Mammary epithelial cell (primary cell): ENCODE measurements at regions of chr12 and their contacts with region 1.

Region 1: DNA sequence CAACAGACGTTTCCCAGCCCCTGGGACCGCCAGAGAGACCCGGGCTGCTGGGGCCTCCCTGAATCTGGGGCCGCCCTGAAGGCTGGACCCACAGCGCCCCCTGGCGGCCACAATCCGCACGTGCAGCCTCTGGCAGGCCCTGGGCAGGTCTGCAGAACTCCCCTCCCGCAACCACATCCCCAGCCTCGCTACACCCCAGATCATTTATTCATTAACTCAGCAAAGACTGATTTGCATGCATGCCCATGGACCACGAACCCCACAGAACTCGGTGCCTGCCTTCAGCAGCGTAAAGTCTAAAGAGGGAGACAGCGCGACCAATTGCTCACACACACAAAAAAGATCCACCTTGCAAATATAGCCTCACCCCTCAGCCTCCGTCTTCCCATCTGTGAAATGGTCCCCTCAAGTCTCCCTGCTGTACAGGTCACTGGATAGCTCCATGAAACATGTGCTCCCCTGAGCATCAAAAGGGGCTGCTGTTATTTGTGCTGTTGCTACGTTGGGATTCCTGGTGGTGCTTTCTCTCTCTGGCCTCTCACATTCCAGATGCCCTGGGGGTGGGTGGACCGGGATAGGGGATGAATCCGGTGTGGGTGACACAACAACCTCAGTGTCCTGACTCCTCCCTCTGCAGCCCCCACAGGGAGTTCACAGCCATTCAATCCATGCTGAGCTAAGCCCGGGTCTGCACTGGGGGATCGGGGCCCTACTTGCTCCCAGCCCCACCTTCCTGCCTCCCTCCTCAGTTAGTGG is 96.4 kb downstream of the SCARB1 start:
- DNase-seq: peak; percentile 43
- H3K4me3 ChIP-seq: no peak overlapping the region
- H3K27ac ChIP-seq: no peak overlapping the region
- H3K4me1 ChIP-seq: peaks cover 11% of the 10 kb centered on the region
- H3K27me3 ChIP-seq: no peaks in the 10 kb centered on the region
- CTCF ChIP-seq: peak; percentile 78 to 98

Region 2: GRCh38 chr12:123801573-123802178 is 965.6 kb before region 1 on chr12:
- CTCF ChIA-PET with region 1: no interaction called
- dilution Hi-C with region 1: no loop called
- in situ Hi-C with region 1: no loop called
- intact Hi-C with region 1: loop called (anchors 5 kb)
- DNase-seq: peak; percentile 12
- H3K4me3 ChIP-seq: no peak overlapping the region
- H3K27ac ChIP-seq: no peak overlapping the region
- H3K4me1 ChIP-seq: no peaks in the 10 kb centered on the region
- H3K27me3 ChIP-seq: peaks cover 2% of the 10 kb centered on the region
- CTCF ChIP-seq: peak; percentile 54 to 69

Region 3: DNA sequence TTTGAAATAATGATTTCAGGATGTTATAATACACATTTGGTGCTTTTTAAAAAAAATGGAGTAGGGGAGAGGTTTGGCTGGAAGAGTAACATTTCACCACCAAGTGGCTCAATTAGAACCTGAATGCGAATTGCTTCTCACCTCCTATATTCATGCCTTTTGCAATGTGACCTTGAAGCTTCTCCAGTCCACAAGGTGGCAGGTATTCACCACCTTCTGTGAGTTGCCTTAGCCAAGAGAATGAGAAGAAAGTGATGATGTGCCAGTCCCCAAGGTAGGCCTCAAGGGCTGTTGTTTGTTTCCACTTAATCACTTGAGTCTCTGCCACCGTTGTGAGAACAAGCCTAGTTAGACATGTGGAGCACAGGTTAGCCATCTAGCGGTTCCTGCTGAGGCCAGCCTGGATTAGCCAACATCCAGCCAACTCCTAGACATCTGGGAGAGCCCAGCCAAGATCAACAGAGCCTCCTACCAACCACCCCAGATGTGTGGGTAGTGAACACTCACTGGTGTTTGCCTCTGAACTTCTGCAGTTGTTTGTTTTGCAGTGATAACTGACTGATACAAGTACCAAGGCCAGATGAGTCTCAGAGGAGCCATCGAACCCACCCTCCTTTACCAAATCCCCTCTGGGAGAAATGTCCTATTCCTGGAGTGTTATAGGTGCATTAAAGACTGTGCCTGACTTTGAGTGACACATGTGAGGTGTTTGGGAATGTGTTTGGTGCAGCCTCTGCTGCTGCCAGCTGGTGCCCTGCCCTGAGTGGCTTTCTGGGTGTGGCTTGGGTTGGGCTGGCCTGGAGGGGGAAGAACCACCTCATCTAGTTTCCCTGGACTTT is 604.9 kb before region 1 on chr12:
- CTCF ChIA-PET with region 1: no interaction called
- dilution Hi-C with region 1: no loop called
- in situ Hi-C with region 1: no loop called
- intact Hi-C with region 1: loop called (anchors 10 kb)
- DNase-seq: peak; percentile 19
- H3K4me3 ChIP-seq: no peak overlapping the region
- H3K27ac ChIP-seq: no peak overlapping the region
- H3K4me1 ChIP-seq: no peaks in the 10 kb centered on the region
- H3K27me3 ChIP-seq: no peaks in the 10 kb centered on the region
- CTCF ChIP-seq: peak in 1 of 2 donors; percentile 29

Region 4: DNA sequence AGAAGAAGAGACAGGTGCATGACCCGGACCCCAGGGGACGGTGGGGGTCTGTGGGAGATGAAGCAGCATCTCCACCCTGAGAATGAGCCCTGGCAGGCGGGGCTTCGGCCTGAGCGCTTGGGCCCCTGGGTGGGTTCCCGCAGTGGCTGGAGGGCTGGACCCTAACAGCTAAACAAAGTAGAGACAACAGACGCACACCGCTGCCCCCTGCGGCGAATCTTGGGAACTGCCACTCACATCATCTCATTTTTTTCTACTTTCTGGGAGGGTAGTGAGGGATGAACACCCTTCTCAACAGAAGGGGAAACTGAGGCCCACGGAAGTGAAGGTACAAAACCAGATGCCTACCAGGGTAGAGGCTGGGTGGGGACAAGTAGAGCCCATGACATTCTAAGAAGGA is 367.6 kb before region 1 on chr12:
- CTCF ChIA-PET with region 1: no interaction called
- dilution Hi-C with region 1: no loop called
- in situ Hi-C with region 1: loop called in 1 of 2 experiments (anchors 25 kb)
- intact Hi-C with region 1: no loop called
- DNase-seq: no peak
- H3K4me3 ChIP-seq: no peak overlapping the region
- H3K27ac ChIP-seq: no peak overlapping the region
- H3K4me1 ChIP-seq: no peaks in the 10 kb centered on the region
- H3K27me3 ChIP-seq: no peaks in the 10 kb centered on the region
- CTCF ChIP-seq: peak; percentile 58 to 69

Region 5: DNA sequence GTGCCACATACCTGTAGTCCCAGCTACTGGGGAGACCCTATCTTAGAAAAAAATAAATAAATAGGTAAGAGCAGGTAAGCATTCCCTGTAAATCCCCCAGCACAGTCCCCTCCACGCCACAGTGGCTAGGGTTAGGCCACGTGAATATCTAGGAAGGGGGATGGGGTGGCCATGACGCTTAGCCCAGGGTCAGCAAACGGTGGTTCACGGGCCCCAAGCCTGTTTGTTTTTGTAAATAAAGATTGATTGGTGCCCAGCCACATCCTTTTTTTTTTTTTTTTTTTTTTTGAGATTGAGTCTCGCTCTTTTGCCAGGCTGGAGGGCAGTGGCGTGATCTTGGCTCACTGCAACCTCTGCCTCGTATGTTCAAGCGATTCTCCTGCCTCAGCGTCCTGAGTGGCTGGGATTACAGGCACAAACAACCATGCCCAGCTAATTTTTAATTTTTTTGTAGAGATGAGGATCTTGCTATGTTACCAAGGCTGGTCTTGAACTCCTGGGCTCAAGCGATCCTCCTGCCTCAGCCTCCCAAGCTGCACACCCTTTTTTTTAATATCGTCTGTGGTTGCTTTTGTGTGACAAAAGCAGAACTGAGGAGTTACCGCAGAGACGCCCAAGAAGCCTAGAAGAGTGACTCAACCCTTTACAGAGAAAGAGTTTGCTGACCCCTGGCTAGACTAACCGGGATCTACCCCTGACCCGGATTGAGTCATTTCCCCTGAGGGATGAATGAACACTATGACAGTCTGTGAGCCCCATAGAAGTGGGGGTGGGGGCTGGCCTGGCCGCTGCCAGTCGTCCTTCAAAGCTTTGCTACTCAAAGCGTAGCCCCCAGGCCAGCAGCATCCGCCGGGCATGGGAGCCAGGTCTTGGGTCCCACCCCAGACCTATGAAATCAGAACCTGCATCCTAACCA is 86.1 kb before region 1 on chr12:
- CTCF ChIA-PET with region 1: no interaction called
- dilution Hi-C with region 1: no loop called
- in situ Hi-C with region 1: loop called in 1 of 2 experiments (anchors 10 kb)
- intact Hi-C with region 1: loop called (anchors 5 kb)
- DNase-seq: peak; percentile 97
- H3K4me3 ChIP-seq: no peak overlapping the region
- H3K27ac ChIP-seq: peak overlapping the region; percentile 42
- H3K4me1 ChIP-seq: peaks cover 43% of the 10 kb centered on the region
- H3K27me3 ChIP-seq: no peaks in the 10 kb centered on the region
- CTCF ChIP-seq: peak; percentile 34 to 61

Region 6: DNA sequence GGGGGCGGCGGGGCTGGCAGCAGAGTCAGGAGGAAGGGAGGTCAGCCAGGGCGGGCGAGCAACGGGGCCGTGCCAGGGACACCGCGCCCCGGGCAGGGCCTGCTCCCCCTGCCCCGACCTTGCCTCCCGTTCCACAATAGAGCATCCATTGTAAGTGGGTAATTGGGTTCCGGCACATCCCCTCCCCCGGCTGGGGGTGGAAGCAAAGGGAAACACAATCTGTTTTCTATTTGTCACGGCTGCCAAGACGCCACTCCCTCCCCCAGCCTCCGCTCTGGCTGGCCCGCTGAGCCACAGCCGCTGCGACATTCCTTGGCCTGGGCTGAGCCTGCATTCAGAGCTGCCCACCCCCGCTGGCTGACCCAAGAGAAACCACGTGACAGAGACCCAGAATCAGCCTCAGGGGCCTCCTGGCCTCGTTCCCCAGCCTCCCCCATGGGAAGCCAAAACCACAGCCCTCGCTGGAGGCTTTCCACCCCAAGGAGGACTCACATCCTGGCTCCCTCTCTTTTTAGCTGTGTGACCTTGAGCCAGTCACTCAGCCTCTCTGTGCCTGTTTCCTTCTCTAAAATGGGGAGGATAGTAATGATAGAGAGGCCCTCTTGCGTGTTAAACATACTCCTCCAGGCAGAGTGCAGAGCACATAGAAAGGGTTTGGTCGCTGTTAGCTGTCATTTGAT is 21.2 kb before region 1 on chr12:
- CTCF ChIA-PET with region 1: no interaction called
- dilution Hi-C with region 1: no loop called
- in situ Hi-C with region 1: no loop called
- intact Hi-C with region 1: loop called (anchors 1 kb)
- DNase-seq: peak; percentile 77
- H3K4me3 ChIP-seq: no peak overlapping the region
- H3K27ac ChIP-seq: no peak overlapping the region
- H3K4me1 ChIP-seq: peaks cover 23% of the 10 kb centered on the region
- H3K27me3 ChIP-seq: no peaks in the 10 kb centered on the region
- CTCF ChIP-seq: no peak

Region 7: DNA sequence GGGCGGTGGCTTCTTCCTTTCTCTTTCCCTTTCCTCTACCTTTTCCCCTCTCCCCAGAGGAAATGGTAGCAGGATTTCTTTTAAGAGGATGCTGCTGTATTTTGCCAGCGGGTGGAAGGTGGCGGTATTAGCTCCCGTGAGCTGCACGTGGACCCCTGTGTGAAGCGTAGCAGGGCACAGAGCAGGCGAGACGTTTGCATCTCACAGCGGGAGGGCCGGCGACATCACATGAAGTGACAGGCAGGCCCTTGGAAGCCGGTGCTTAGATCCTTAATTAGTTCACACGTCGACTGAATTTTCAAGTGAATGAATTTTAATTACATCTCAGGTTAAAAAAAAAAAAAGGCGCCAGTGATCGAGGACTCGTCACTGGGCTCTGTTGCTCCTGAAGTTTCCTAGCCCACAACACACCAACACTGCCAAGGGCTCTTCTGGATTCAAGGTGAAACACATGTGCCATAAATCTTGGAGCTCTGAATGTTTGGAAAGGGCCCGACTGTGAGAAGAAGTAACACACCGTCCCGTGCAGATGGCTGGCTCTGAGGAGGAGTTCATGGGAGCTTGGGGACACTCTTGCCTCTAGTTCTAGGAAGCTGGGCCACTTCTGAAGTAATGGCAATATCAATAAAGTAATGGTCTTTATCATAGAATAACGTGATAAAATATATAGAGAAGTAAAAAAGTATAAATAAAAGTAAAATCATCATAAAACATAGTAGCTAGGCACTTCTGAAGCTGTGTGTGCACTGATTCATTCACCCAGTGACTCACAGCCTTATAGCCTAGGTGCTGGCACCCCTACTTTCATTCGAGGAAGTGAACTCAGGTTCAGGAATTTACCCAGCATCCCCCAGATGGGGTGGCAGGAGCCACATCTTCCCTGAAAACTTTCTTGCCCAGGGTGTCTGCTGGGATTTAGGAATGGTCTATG is 373.3 kb after region 1 on chr12:
- CTCF ChIA-PET with region 1: no interaction called
- dilution Hi-C with region 1: no loop called
- in situ Hi-C with region 1: no loop called
- intact Hi-C with region 1: no loop called
- DNase-seq: peak; percentile 77
- H3K4me3 ChIP-seq: no peak overlapping the region
- H3K27ac ChIP-seq: peak overlapping the region; percentile 44
- H3K4me1 ChIP-seq: peaks cover 16% of the 10 kb centered on the region
- H3K27me3 ChIP-seq: no peaks in the 10 kb centered on the region
- CTCF ChIP-seq: no peak